Activated CD4-positive, alpha-beta T cell treated with anti-CD3 and anti-CD28 coated beads for 36 hours (primary cell): ENCODE measurements at regions of chr1 and their contacts with region 1.

Region 1: DNA sequence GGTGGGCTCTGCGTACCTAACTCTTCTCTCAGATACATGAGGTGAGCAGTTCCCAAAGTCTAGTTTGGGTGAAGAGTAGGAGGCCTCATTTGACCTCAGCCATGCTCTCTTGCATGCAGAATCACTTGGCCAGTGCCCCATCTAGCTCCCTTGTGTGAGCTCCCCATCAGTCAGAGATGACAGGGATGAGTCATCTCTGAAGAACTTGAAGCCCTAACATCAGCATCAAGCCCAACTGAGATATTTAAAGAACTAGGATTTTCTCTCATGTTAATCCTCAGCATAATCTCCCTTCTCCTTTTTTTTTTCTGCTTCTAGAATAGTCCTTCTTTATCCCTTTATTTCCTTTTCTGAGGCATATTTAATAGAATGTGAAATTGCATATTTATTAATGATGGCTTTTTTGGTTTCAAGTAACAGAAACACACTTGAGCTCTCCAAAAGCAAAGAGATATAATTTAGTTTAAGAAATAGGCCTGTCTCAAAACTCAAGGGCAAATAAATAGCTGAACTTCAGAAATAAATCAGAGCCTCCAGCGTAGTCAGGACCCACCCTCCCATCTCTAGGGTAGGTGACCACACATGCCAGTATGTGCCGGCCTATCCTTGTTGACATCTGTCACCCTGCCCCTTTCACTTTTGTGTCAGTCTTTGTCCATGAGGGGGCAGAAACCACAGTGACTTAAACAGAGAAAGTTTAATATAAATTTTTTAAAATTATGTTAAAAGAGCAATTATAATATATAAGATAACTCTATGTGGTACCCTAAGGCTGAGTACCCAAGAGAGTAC is 112.3 kb downstream of the TSEN15 start:
- DNase-seq: peak; percentile 30
- ATAC-seq: no peak
- H3K4me3 Mint-ChIP-seq: no peak overlapping the region
- H3K27ac Mint-ChIP-seq: no peak overlapping the region
- H3K4me1 Mint-ChIP-seq: peaks cover 3% of the 10 kb centered on the region
- H3K27me3 Mint-ChIP-seq: no peaks in the 10 kb centered on the region

Region 2: DNA sequence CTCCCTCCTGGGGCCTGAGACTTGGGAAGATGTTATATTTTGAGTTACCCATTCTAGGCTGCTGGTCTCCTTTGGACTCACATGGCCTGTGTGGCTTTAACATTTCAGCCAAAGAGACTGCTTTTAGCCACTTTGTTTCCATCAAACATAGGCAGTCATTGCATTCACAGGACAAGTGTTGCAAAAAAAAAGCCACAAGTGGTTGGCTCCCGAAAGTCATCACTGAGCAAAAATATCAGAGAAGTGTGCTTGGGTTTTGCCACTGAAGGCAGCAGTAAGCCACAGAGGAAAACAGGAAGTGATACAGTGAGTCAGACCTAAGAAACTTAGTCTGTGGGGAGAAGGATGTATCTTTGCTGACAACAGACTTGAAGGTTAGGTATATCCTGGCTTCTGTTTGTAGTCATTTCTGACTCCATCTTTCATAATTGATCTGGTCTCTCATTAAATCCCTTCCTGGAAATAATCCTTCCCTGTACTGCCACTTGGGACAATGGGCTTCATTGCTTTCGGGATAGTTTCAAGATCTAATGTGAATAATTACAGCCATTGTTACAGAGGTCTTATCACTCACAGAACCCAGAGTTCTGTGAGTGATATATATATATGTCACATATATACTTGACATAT is 207.2 kb before region 1 on chr1:
- CTCF ChIA-PET with region 1: no interaction called
- POLR2A ChIA-PET with region 1: no interaction called
- intact Hi-C with region 1: loop called (anchors 1 to 5 kb)
- DNase-seq: peak; percentile 67
- ATAC-seq: peak; percentile 99
- H3K4me3 Mint-ChIP-seq: no peak overlapping the region
- H3K27ac Mint-ChIP-seq: peak overlapping the region; percentile 77
- H3K4me1 Mint-ChIP-seq: peaks cover 7% of the 10 kb centered on the region
- H3K27me3 Mint-ChIP-seq: no peaks in the 10 kb centered on the region

Region 3: DNA sequence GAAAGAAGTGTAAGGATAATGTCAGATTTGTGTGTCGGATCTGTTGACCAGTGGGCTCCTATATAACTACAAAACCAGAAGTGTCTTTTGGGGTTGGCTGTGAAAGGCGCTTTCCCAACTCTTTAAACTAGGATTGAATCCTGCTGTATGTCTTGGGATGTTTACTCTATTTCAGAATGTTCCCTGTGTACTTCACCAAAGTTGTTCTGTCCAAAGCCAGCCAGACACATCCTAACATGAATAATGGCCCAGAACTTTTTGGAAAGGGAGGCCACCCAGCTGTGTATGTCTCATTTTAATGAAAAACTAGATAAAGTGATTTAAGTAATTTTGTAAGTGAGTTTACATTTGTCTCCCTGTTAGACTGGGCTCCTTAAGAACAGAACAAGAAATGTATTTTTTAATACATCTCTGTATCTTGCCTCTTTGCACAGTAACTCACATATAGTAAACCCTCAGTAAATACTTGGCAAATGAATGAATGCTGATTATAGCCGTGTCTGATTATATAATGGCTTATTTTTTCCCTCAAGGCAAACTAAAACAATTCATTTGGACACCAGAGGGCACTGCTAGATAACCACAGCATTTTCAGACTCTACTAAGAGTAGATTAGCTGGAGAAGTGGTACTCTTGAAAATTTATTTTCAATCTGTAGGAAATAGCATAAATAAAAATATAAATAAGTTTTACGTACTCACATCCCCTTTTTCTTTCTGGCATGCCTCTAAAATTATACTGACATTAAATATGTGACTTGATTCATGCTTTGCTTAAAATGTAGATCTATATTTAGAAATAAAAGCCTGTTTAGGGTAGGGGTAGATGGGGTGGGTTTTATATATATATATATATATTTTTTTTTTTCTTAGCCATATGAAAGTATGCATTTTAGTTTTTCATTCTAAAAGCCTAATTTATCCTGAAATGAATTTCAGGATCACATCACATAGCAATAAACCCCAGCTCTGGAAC is 88.5 kb before region 1 on chr1:
- CTCF ChIA-PET with region 1: interaction called, 3 read pairs
- POLR2A ChIA-PET with region 1: no interaction called
- intact Hi-C with region 1: loop called in 1 of 2 experiments (anchors 5 kb)
- DNase-seq: peak; percentile 19
- ATAC-seq: no peak
- H3K4me3 Mint-ChIP-seq: no peak overlapping the region
- H3K27ac Mint-ChIP-seq: no peak overlapping the region
- H3K4me1 Mint-ChIP-seq: peaks cover 19% of the 10 kb centered on the region
- H3K27me3 Mint-ChIP-seq: no peaks in the 10 kb centered on the region

Region 4: GRCh38 chr1:184143449-184143848 is 20.4 kb before region 1 on chr1:
- CTCF ChIA-PET with region 1: no interaction called
- POLR2A ChIA-PET with region 1: no interaction called
- intact Hi-C with region 1: no loop called
- DNase-seq: no peak
- ATAC-seq: no peak
- H3K4me3 Mint-ChIP-seq: no peak overlapping the region
- H3K27ac Mint-ChIP-seq: no peak overlapping the region
- H3K4me1 Mint-ChIP-seq: no peaks in the 10 kb centered on the region
- H3K27me3 Mint-ChIP-seq: peaks cover 20% of the 10 kb centered on the region

Region 5: GRCh38 chr1:184494929-184495328 is 331.1 kb after region 1 on chr1:
- CTCF ChIA-PET with region 1: no interaction called
- POLR2A ChIA-PET with region 1: interaction called, 4 read pairs
- intact Hi-C with region 1: loop called in 1 of 2 experiments (anchors 5 kb)
- DNase-seq: no peak
- ATAC-seq: no peak
- H3K4me3 Mint-ChIP-seq: no peak overlapping the region
- H3K27ac Mint-ChIP-seq: no peak overlapping the region
- H3K4me1 Mint-ChIP-seq: peaks cover 17% of the 10 kb centered on the region
- H3K27me3 Mint-ChIP-seq: no peaks in the 10 kb centered on the region

Region 6: DNA sequence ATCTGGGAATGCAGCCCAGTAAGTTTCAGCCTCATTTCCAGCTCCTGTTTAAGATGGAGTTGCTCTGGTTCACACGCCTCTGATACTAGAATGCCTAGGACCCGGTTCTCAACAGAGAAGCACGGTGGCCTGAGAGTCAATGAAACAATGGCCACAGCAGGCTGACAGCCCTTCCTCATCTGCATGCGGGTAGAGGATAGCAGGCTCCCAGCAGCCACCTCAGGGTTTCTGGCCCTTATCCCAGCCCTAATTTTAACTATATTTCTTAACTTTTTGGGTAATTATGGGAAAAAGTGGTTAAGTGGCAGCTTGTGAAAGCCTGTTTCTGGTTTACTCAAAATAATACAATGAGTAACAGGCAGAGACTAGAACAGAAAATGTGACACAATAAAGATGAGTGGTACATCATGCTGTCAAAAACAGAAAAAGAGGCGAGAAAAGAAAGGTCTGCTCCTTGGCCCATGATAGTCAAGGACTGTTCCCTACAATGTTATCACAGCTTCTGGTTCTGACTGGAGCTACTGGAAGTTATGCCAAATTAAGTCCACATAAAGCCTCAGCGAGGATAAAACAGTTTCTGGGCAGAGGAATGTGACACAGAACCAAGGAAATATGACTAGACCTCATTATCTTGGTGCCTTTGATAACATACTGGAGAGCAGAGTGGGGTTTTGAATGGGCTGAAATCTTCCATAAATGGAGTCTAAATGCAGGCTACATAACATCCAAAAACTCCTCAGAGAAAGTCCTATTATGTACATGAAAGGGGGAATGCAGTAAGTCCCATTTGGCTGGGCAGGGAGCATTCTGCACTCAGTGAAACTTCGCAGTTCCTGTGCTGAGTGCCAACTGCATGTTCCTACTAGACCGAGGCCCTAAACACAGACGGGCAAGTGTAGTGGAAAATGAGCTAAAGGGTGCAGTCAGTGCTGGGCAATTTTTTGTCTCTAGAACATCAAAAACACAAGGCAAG is 718.4 kb after region 1 on chr1:
- CTCF ChIA-PET with region 1: no interaction called
- POLR2A ChIA-PET with region 1: no interaction called
- intact Hi-C with region 1: loop called in 1 of 2 experiments (anchors 2 kb)
- DNase-seq: peak; percentile 50
- ATAC-seq: peak; percentile 79
- H3K4me3 Mint-ChIP-seq: peak overlapping the region; percentile 5
- H3K27ac Mint-ChIP-seq: peak overlapping the region; percentile 90
- H3K4me1 Mint-ChIP-seq: peaks cover 27% of the 10 kb centered on the region
- H3K27me3 Mint-ChIP-seq: peaks cover 6% of the 10 kb centered on the region

Region 7: DNA sequence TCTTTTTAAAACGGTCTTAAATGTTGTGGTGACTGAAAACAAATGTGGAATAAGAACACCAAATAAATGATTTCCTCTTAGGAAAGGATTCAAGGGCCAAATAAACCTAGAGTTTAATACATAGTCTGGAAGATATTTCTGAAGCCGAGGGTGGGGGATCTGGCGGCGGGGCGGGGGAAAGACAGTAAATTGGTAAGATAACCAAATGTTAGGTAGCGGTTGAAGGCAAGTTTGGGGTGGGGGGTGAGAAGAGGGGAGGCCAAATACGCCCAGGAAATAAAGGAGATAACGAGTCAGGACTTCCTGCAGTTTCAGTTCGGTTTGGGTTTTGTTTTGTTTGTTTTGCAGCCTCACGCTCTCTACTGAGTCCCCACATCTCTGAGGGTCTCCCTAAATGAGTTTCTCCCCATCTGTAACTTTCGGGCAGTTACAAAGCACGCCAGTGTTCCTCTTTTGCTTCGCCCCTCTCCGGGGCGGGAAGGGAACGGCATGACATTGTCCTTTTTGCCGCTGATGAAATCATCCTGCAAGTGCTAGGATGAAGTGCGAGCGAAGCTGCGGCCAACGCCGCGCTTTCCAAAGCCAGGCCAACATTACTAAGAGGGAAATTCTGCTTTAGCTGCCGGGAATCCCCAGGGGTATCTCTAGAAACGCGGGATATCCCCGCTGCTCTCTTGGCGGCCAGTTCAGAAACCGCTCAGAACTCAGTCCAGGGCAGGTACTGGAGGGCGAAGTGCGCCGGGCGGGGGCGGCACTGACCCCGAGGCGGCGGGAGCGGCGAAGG is 809.6 kb after region 1 on chr1:
- CTCF ChIA-PET with region 1: no interaction called
- POLR2A ChIA-PET with region 1: no interaction called
- intact Hi-C with region 1: loop called in 1 of 2 experiments (anchors 10 kb)
- DNase-seq: peak; percentile 84
- ATAC-seq: peak; percentile 63
- H3K4me3 Mint-ChIP-seq: peak overlapping the region; percentile 86
- H3K27ac Mint-ChIP-seq: peak overlapping the region; percentile 97
- H3K4me1 Mint-ChIP-seq: peaks cover 45% of the 10 kb centered on the region
- H3K27me3 Mint-ChIP-seq: peaks cover 16% of the 10 kb centered on the region